ENCODE measurements at regions of chr2 and their contacts with region 1.

Region 1: GRCh38 chr2:24421668-24422067 is 61.3 kb upstream of the ITSN2 start:
- DNase-seq: peak; percentile 15 to 61
- ATAC-seq: peak; percentile 71 to 79
- H3K4me3 ChIP-seq: no peak overlapping the region
- H3K27ac ChIP-seq: no peak overlapping the region
- H3K4me1 ChIP-seq: peaks cover 0 to 3% of the 10 kb centered on the region in 2 donors
- H3K27me3 ChIP-seq: no peaks in the 10 kb centered on the region
- CTCF ChIP-seq: peak; percentile 49 to 67 (median 56)
- POLR2A ChIP-seq: no peak

Region 2: DNA sequence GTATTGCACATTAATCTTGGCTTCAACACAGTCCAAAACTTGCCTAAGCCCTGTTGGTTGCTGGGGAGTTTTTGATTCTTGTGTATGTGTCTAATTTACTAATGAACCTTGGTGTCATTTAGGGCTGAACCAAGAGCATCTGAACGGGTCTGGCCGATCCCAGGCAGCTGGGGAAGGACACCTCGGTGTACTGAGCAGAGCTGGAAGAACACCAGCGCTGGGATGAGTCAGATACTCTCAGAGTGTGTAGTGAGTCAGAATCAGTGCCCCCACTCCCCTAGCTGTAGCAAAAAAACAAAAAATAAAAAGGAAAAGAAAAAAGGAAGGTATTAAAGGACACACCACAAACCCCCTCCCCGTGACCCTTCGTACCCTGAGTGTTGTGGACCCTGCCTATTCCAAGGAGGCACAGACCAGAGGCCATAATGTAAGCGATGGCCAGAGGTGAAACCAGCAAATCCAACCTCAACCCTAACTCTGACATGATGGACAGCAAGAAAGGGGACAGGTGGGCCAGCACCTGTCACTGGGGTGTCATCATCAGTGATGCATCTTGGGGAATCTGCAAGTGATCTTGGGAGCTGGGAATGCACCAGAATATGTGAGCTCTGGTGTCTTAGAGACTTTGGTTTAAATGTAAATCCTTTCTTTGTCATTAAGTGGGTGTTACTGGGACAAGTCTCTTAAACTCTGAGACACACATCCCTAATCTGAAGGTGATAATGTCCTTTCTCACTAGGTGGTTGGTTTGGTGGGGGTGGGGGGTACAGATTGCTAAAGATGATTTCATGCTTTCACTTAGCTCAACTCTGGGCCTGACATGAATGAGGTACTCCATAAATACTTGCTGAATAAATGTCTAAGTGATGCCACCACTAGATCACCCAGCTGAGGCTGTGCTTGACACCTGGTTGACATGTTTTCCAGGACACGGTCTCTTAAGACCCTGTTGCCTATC is 35.2 kb after region 1 on chr2:
- in situ Hi-C with region 1: no loop called
- intact Hi-C with region 1: loop called (anchors 1 kb)
- DNase-seq: peak; percentile 88 to 92
- ATAC-seq: peak; percentile 97 to 98
- H3K4me3 ChIP-seq: no peak overlapping the region
- H3K27ac ChIP-seq: peak overlapping the region; percentile 63 to 88 (median 86)
- H3K4me1 ChIP-seq: peaks cover 28 to 43% of the 10 kb centered on the region in 2 donors
- H3K27me3 ChIP-seq: no peaks in the 10 kb centered on the region
- CTCF ChIP-seq: peak in 1 of 5 experiments; percentile 25
- POLR2A ChIP-seq: no peak

Region 3: GRCh38 chr2:24827321-24828237 is 405.9 kb after region 1 on chr2:
- in situ Hi-C with region 1: loop called in 2 of 4 experiments (anchors 5 to 10 kb)
- intact Hi-C with region 1: loop called (anchors 1 kb)
- DNase-seq: peak; percentile 65 to 76
- ATAC-seq: peak; percentile 92 to 97
- H3K4me3 ChIP-seq: peak overlapping the region in 2 of 4 donors; percentile 6 to 30
- H3K27ac ChIP-seq: no peak overlapping the region
- H3K4me1 ChIP-seq: peaks cover 0 to 13% of the 10 kb centered on the region in 2 donors
- H3K27me3 ChIP-seq: no peaks in the 10 kb centered on the region
- CTCF ChIP-seq: peak; percentile 72 to 91 (median 83)
- POLR2A ChIP-seq: no peak